OCI-LY7 (cell line): ENCODE measurements at regions of chr1 and their contacts with region 1.

Region 1: GRCh38 chr1:246931549-246932365 is at the start of gene AHCTF1:
- DNase-seq: peak; percentile 97
- H3K4me3 ChIP-seq: peak within 1 kb of the TSS; percentile 95
- H3K27ac ChIP-seq: peak within 1 kb of the TSS; percentile 88
- H3K4me1 ChIP-seq: peaks cover 10% of the 10 kb centered on the region
- CTCF ChIP-seq: no peak
- total RNA-seq, gene AHCTF1: 36.4 and 38.5 TPM in 2 replicates

Region 2: DNA sequence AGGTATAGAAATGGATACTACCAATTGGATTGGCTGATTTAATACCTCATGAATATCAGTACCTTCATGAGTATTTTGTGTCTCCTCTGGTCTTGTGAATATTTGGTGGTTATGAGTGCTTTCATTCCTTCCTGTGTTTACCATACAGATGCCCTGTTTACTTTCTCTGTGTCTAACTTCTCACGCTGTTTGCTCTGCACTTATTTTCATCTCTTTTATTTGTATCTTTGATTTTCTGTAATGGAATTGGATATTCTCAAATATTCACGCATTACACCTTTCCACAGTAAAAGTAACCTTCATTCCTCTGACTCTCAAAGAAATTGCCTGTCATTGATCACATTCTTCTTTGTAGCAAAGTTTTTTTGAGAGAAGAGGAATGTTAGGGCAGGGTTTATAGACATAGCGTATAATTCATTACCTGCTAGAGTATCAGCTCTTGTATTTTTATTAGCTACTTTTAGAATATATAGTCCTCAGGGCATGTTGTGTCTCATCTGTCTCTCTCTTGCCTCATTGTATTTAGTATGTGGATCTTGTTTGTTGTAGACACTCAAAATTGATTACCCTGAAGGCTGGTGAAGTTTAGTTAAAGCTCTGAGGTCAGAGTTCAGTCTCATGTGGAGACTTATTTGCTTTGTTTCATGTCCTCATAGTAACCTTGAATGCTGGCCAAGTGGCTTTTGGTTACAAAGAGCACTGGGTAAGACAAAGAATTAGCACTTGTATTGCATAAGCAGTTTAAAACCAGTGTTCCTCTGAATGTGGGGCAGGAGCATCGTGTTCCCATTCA is 348.5 kb before region 1 on chr1:
- CTCF ChIA-PET with region 1: no interaction called
- POLR2A ChIA-PET with region 1: no interaction called
- intact Hi-C with region 1: no loop called
- DNase-seq: no peak
- H3K4me3 ChIP-seq: no peak overlapping the region
- H3K27ac ChIP-seq: no peak overlapping the region
- H3K4me1 ChIP-seq: peaks cover 28% of the 10 kb centered on the region
- CTCF ChIP-seq: no peak

Region 3: GRCh38 chr1:247007511-247008405 is 76.0 kb after region 1 on chr1 and contains the start of gene ZNF695:
- CTCF ChIA-PET with region 1: no interaction called
- POLR2A ChIA-PET with region 1: no interaction called
- intact Hi-C with region 1: loop called (anchors 2 kb)
- DNase-seq: peak; percentile 96
- H3K4me3 ChIP-seq: peak within 1 kb of the TSS; percentile 86
- H3K27ac ChIP-seq: no peak within 1 kb of the TSS
- H3K4me1 ChIP-seq: no peaks in the 10 kb centered on the region
- CTCF ChIP-seq: no peak
- total RNA-seq, gene ZNF695: 9.8 and 15.0 TPM in 2 replicates

Region 4: GRCh38 chr1:247078261-247079140 is 146.7 kb after region 1 on chr1 and contains the start of gene ZNF670:
- CTCF ChIA-PET with region 1: no interaction called
- POLR2A ChIA-PET with region 1: interaction called, 3 read pairs
- intact Hi-C with region 1: loop called (anchors 2 kb)
- DNase-seq: peak; percentile 97
- H3K4me3 ChIP-seq: peak within 1 kb of the TSS; percentile 85
- H3K27ac ChIP-seq: peak within 1 kb of the TSS; percentile 46
- H3K4me1 ChIP-seq: peaks cover 18% of the 10 kb centered on the region
- CTCF ChIP-seq: peak; percentile 65
- total RNA-seq, gene ZNF670: 5.5 and 5.8 TPM in 2 replicates